RWPE1 (cell line): ENCODE measurements at regions of chr1 and their contacts with region 1.

Region 1: DNA sequence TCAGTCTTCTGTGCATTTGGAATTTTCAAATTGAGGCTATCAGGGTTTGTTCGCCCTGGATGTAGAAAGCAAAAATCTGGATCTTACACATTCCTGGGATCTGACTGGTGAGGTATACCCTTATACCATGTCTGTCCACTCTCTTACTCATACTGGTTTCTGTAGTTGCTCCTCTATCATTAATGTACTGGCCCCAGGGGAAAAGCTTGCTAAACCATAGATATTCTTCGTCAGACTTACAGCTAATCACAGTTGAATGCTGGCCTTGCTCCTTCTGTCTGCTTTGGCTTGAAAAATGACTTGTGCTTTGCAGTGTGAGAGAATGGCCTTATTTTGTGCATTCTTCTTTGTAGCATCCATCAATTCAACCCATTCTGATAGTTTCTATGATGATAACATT is 30.5 kb downstream of the TBCE start:
- DNase-seq: peak; percentile 94
- H3K27ac ChIP-seq: no peak overlapping the region
- CTCF ChIP-seq: no peak

Region 2: GRCh38 chr1:235357485-235358378 is 40.0 kb before region 1 on chr1:
- CTCF ChIA-PET with region 1: no interaction called
- POLR2A ChIA-PET with region 1: interaction called, 10 read pairs
- DNase-seq: no peak
- H3K27ac ChIP-seq: no peak overlapping the region
- CTCF ChIP-seq: no peak